Heart left ventricle (tissue), 16 donors: ENCODE measurements at regions of chr9 and their contacts with region 1.

Region 1: GRCh38 chr9:104927912-104928740 is at the start of gene ABCA1:
- DNase-seq: peak; percentile 89 to 96 (median 93)
- ATAC-seq: peak; percentile 79 to 90 (median 87)
- H3K4me3 ChIP-seq: peak within 1 kb of the TSS; percentile 61 to 90 (median 74)
- H3K27ac ChIP-seq: peak within 1 kb of the TSS; percentile 71 to 95 (median 86)
- H3K4me1 ChIP-seq: peaks cover 0 to 38% (median 9%) of the 10 kb centered on the region in 12 donors
- H3K27me3 ChIP-seq: no peaks in the 10 kb centered on the region
- CTCF ChIP-seq: no peak
- POLR2A ChIP-seq: peak in 1 of 2 donors; percentile 77
- total RNA-seq, gene ABCA1: 5.2 to 45.3 (median 12.0) TPM

Region 2: GRCh38 chr9:104850786-104851545 is 77.2 kb before region 1 on chr9:
- intact Hi-C with region 1: no loop called
- DNase-seq: no peak
- ATAC-seq: no peak
- H3K4me3 ChIP-seq: no peak overlapping the region
- H3K27ac ChIP-seq: peak overlapping the region in 1 of 12 donors; percentile 74
- H3K4me1 ChIP-seq: peaks cover 0 to 20% (median 0%) of the 10 kb centered on the region in 12 donors
- H3K27me3 ChIP-seq: no peaks in the 10 kb centered on the region
- CTCF ChIP-seq: no peak
- POLR2A ChIP-seq: no peak

Region 3: DNA sequence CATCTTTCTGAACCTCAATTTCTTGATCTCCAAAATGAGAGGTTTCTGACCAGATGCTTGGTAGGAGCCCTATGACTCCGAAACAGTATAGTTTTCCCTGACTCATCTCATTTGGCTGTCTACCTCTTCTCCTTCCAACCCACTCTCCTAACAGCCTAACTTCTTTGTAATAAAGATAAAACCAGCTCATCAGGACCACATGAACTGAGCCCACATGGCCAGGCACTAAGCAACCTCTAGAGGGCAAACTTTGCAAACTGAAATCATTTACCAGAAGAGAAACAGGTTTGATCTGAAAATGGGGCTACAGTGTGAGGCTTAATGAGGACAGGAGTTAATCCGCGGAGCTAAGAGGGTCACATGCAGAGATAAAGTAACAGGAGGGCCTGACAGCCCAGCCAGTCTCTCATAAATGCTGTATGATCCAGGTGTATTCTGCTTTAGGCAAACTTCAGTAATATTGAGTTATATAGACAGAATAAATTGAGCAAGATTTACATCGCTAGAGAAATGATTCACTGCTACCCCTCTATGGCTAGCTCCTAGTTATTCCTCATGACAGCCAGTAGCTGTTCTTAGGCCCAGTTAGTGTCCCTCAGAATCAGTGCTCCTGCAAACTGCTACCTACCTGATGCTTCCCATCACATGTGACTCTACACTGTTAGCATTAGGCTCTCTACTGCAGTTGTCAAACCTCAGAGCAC is 64.8 kb before region 1 on chr9:
- intact Hi-C with region 1: loop called in 9 of 10 experiments (anchors 1 to 10 kb)
- DNase-seq: peak in 2 of 5 donors; percentile 27 to 41
- ATAC-seq: peak; percentile 60 to 81 (median 68)
- H3K4me3 ChIP-seq: no peak overlapping the region
- H3K27ac ChIP-seq: peak overlapping the region in 2 of 12 donors; percentile 26 to 44
- H3K4me1 ChIP-seq: peaks cover 0 to 57% (median 27%) of the 10 kb centered on the region in 12 donors
- H3K27me3 ChIP-seq: no peaks in the 10 kb centered on the region
- CTCF ChIP-seq: peak; percentile 57 to 91 (median 77)
- POLR2A ChIP-seq: no peak

Region 4: DNA sequence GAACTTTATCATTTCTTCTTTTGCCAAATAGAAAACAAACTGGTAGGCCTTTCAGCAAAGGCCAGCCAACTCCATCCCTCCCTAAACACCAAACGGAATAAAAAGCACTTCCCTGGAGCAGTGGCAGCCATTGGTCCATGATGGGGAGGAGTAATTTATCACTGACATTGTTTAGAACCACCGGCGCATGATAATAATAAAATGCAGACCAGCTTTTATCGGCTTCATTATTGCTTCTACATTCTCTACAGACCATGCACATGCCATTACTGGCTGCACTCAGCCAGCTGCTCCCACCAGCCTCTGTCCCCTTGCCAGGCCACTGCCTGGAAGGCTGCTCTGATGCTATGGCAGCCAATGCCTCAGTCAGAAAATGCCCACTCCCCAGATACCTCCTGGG is 46.0 kb before region 1 on chr9:
- intact Hi-C with region 1: no loop called
- DNase-seq: no peak
- ATAC-seq: no peak
- H3K4me3 ChIP-seq: no peak overlapping the region
- H3K27ac ChIP-seq: no peak overlapping the region
- H3K4me1 ChIP-seq: peaks cover 0 to 34% (median 15%) of the 10 kb centered on the region in 12 donors
- H3K27me3 ChIP-seq: no peaks in the 10 kb centered on the region
- CTCF ChIP-seq: no peak
- POLR2A ChIP-seq: no peak

Region 5: DNA sequence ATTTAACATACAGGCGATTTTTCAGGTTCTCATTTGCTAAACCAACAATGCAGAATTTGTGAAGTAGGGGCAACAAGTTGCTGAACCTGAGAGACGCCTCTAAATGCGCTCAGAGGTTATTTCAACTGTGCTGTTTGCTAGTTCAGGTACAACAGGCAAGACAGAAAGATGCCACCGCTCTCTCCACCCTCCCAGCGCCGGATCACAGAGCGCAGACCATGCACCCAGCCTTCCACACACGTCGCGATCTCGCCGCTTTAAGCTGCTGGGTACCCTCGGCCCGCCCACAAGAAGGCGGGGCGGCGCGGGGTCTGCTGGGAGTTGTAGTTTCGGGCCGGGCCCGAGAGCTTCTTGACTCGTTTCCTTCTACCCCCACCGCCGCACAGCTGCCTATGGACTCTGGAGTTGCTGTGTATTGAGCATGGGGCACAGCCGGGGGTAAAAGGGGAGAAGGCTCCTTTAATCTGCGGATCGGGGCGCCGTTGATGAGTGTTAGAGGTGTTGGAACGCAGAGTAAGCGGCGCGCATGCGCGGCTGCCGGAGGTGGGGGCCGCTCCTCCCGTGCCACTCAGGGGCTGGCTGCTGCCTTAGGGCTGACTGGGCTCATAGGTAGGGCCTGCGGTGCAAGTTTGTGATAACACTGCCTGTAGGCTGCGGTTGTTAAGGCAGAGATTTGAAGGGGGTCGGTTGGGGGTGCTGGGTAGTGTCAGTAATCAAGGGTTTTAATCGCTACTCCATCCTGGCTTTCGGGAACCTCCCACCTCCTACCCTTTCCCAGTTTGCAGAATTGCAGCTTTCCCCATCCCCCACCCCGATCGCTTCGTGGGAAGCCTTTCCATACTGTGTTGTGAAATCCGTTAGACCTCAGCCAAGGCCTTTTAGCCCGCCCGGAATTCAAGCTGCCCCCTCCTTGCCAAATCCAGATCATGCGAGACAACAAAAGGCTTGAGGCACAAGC is 40.2 kb after region 1 on chr9:
- intact Hi-C with region 1: loop called (anchors 1 to 2 kb)
- DNase-seq: peak; percentile 86 to 94 (median 91)
- ATAC-seq: peak; percentile 95 to 98 (median 98)
- H3K4me3 ChIP-seq: peak overlapping the region in 11 of 12 donors; percentile 49 to 95 (median 79)
- H3K27ac ChIP-seq: peak overlapping the region; percentile 69 to 97 (median 86)
- H3K4me1 ChIP-seq: peaks cover 0 to 24% (median 8%) of the 10 kb centered on the region in 12 donors
- H3K27me3 ChIP-seq: no peaks in the 10 kb centered on the region
- CTCF ChIP-seq: peak in 1 of 12 donors; percentile 7
- POLR2A ChIP-seq: peak in 1 of 2 donors; percentile 11

Region 6: GRCh38 chr9:105039175-105039799 is 111.2 kb after region 1 on chr9:
- intact Hi-C with region 1: no loop called
- DNase-seq: no peak
- ATAC-seq: peak in 1 of 4 donors; percentile 41
- H3K4me3 ChIP-seq: no peak overlapping the region
- H3K27ac ChIP-seq: no peak overlapping the region
- H3K4me1 ChIP-seq: peaks cover 0 to 12% (median 0%) of the 10 kb centered on the region in 12 donors
- H3K27me3 ChIP-seq: no peaks in the 10 kb centered on the region
- CTCF ChIP-seq: no peak
- POLR2A ChIP-seq: no peak

Region 7: DNA sequence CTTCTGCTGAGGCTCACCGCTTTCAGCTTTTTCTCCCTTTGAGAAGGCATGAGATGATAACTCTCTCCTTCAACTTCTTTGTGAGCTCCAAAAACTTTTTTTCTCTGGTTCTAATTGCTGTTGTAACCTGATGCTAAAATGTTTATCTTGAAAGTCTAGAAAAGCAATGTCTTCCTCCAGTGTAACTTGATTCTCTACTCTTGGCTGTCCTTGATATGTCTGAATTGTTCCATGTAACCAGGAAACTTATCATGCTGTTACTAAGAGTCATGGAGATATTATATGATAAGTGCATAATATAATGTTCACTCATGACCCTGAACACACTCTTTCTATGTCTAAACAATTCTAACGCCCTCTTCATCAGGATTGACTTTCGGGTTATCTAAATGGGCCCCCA is 127.8 kb after region 1 on chr9:
- intact Hi-C with region 1: loop called in 3 of 10 experiments (anchors 5 to 10 kb)
- DNase-seq: no peak
- ATAC-seq: no peak
- H3K4me3 ChIP-seq: no peak overlapping the region
- H3K27ac ChIP-seq: no peak overlapping the region
- H3K4me1 ChIP-seq: peaks cover 0 to 27% (median 0%) of the 10 kb centered on the region in 12 donors
- H3K27me3 ChIP-seq: no peaks in the 10 kb centered on the region
- CTCF ChIP-seq: no peak
- POLR2A ChIP-seq: no peak

Region 8: GRCh38 chr9:105141146-105141975 is 213.2 kb after region 1 on chr9:
- intact Hi-C with region 1: loop called in 1 of 10 experiments (anchors 5 kb)
- DNase-seq: peak in 1 of 5 donors; percentile 38
- ATAC-seq: peak in 3 of 4 donors; percentile 55 to 80 (median 63)
- H3K4me3 ChIP-seq: no peak overlapping the region
- H3K27ac ChIP-seq: peak overlapping the region in 1 of 12 donors; percentile 64
- H3K4me1 ChIP-seq: peaks cover 0 to 37% (median 7%) of the 10 kb centered on the region in 12 donors
- H3K27me3 ChIP-seq: no peaks in the 10 kb centered on the region
- CTCF ChIP-seq: no peak
- POLR2A ChIP-seq: no peak